K562 (cell line): ENCODE measurements at regions of chr1 and their contacts with region 1.

Region 1: DNA sequence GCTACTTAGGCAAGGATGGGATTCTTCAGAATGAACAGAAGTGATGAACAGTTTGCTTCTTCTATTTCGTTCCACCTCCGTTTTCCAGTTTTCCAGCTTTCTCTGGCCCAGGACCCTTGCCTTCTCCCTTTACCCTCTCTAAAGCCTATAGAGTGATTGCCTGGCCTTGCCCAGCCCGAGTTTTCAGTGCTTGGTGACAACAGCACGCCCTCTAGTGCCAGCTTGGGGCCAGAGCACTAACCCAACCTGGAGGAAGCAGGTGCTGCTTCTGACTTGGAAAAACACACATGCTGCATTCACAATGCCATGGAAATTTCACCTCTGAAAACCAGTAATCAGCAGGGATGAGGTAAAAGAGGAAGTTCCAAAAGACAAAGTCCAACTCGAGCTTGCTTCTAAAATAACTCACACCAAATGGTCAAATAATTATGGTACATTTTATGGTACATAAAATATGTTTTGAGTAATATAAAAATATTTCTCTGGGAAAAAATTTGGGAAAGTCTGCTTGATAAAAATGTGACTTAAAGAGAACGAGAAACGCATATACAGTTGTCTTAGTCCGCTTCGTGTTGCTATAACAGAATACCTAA is 26.1 kb downstream of the UBE2T start:
- DNase-seq: peak; percentile 80 to 82 (median 81)
- ATAC-seq: peak; percentile 95
- H3K4me3 ChIP-seq: no peak overlapping the region
- H3K27ac ChIP-seq: no peak overlapping the region
- H3K4me1 ChIP-seq: peaks cover 0 to 12% of the 10 kb centered on the region in 2 experiments; a peak in 1 of 5 replicates
- H3K27me3 ChIP-seq: peaks cover 20 to 52% of the 10 kb centered on the region in 2 experiments
- CTCF ChIP-seq: peak; percentile 94 to 98 (median 97)
- EP300 ChIP-seq: no peak
- POLR2A ChIP-seq: no peak
- RAD21 ChIP-seq: peak; percentile 85 to 96

Region 2: GRCh38 chr1:202184750-202185460 is 130.8 kb before region 1 on chr1:
- CTCF ChIA-PET with region 1: interaction called, 16 read pairs
- POLR2A ChIA-PET with region 1: no interaction called
- in situ Hi-C with region 1: no loop called
- intact Hi-C with region 1: no loop called
- DNase-seq: peak; percentile 86 to 92 (median 90)
- ATAC-seq: peak; percentile 87
- H3K4me3 ChIP-seq: no peak overlapping the region
- H3K27ac ChIP-seq: no peak overlapping the region
- H3K4me1 ChIP-seq: peaks cover 0 to 18% of the 10 kb centered on the region in 2 experiments; a peak in 3 of 5 replicates
- H3K27me3 ChIP-seq: no peaks in the 10 kb centered on the region; a peak in 1 of 5 replicates
- CTCF ChIP-seq: peak; percentile 96
- EP300 ChIP-seq: no peak
- POLR2A ChIP-seq: no peak
- RAD21 ChIP-seq: peak in 1 of 2 experiments; percentile 55; a peak in 3 of 4 replicates

Region 3: GRCh38 chr1:202207292-202207691 is 108.4 kb before region 1 on chr1:
- CTCF ChIA-PET with region 1: no interaction called
- POLR2A ChIA-PET with region 1: no interaction called
- in situ Hi-C with region 1: loop called (anchors 25 kb)
- intact Hi-C with region 1: no loop called
- DNase-seq: no peak
- ATAC-seq: no peak
- H3K4me3 ChIP-seq: no peak overlapping the region
- H3K27ac ChIP-seq: no peak overlapping the region
- H3K4me1 ChIP-seq: peaks cover 5 to 11% of the 10 kb centered on the region in 2 experiments; a peak in 4 of 5 replicates
- H3K27me3 ChIP-seq: peaks cover 15 to 33% of the 10 kb centered on the region in 2 experiments; a peak in 4 of 5 replicates
- CTCF ChIP-seq: no peak
- EP300 ChIP-seq: no peak
- POLR2A ChIP-seq: no peak
- RAD21 ChIP-seq: no peak

Region 4: DNA sequence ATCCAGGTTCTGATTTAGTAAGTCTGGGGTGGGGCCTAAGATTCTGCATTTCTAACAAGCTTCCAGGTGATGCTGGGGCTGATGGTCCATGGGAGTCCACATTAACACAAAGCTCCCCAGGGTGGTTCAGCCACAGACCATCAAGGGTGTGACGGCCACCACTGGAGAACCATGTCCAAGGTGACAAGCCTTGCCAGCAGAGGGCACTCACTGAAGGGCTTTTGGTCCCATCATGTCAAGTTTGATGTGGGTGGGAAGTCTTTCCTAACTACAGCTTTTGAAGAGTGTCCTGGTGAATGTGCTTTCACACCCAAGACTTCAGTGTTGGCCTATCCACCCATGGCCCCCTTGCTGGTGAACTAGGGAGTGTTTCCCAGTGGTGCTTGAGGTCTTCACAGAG is 41.1 kb before region 1 on chr1:
- CTCF ChIA-PET with region 1: interaction called, 5 read pairs
- POLR2A ChIA-PET with region 1: no interaction called
- in situ Hi-C with region 1: no loop called
- intact Hi-C with region 1: loop called (anchors 1 kb)
- DNase-seq: peak; percentile 35 to 61 (median 50)
- ATAC-seq: peak; percentile 89
- H3K4me3 ChIP-seq: no peak overlapping the region
- H3K27ac ChIP-seq: no peak overlapping the region
- H3K4me1 ChIP-seq: no peaks in the 10 kb centered on the region
- H3K27me3 ChIP-seq: peaks cover 26 to 75% of the 10 kb centered on the region in 2 experiments
- CTCF ChIP-seq: peak; percentile 74 to 78 (median 78)
- EP300 ChIP-seq: no peak
- POLR2A ChIP-seq: no peak
- RAD21 ChIP-seq: peak; percentile 7 to 76; a peak in 2 of 4 replicates

Region 5: DNA sequence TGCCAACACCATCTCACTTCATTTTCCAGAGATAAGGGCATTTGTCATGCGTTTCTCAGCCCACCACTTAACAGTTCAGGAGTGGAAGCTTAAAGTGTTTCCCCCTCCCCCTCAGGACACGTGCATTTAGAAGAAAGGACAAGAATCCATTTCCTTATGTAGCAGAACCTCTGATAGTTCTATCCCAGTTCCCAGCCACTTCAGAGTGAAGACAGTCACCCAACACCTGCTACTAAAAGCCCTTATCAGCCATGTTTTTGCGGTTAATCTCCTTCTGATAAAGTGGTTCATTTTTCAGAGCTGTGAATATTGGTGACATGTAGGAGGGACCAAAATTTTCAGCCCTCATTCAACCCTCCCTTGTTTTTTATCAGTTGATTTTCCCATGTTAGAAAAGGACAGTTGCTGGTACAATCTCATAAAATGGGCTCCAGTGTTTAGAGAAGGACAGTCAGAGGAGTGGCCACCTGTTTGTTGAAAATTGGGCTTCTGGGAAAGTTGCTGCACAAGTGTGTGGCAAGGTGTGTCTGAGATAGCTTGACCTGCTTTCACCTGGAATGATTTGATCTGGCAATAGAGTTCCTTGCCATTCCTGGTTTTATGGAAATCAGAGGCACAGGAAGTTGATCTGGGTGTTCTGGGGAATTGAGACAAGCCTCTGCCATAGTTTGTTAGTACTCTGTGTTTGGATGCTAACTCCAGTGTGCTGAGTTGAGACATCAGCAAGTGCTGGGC is 146.8 kb after region 1 on chr1:
- CTCF ChIA-PET with region 1: no interaction called
- POLR2A ChIA-PET with region 1: no interaction called
- in situ Hi-C with region 1: no loop called
- intact Hi-C with region 1: no loop called
- DNase-seq: peak in 3 of 4 experiments; percentile 25 to 77 (median 47)
- ATAC-seq: peak; percentile 70
- H3K4me3 ChIP-seq: no peak overlapping the region
- H3K27ac ChIP-seq: peak overlapping the region; percentile 2; the same call in 1 of the 3 replicates
- H3K4me1 ChIP-seq: peaks cover 0 to 7% of the 10 kb centered on the region in 2 experiments; a peak in 2 of 5 replicates
- H3K27me3 ChIP-seq: no peaks in the 10 kb centered on the region
- CTCF ChIP-seq: no peak
- EP300 ChIP-seq: 0 out of 2 replicates have a peak, but pooled peaks have one; percentile 44
- POLR2A ChIP-seq: no peak
- RAD21 ChIP-seq: no peak; a peak in 1 of 4 replicates